ENCODE measurements at regions of chr12 and their contacts with region 1.

Region 1: DNA sequence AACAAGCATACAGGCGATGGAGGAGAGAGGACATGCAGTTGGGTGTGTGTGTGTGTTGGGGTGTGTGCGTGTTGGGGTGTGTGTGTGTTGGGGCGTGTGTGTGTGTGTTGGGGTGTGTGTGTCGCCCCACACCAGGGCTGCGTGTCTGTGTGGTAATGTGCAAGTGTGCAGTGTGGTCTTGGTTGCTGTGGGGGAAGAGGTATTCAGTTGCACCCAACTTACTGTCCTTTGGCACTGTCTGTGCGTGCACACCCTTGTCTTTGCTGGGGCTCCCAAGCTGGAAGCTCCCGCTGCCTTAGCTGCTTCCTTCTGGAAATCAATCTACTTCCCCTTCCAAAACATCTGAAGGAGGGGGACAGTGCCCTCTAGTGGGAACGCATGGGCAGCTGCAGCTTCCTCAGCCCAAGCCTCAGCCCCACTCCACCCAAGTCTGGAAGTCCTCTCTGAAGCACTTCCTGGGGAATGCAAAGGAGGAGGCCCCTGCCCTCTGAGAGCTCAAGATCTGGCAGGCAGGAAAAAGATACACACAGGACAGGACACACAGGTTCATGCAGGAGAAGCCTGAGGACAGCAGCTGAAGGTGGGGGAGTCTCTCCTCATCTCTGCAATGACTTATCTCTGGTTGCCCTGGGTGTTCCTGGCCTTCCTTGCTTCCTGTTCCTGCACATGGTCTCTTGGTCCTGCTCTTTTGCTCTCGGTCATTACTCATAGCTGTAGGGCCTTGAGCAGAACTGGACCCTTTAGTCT is 13.1 kb downstream of the ASIC1 start:
- DNase-seq: peak; percentile 64
- H3K27ac ChIP-seq: peak overlapping the region; percentile 56
- CTCF ChIP-seq: peak; percentile 96

Region 2: GRCh38 chr12:49567611-49568441 is 502.7 kb before region 1 on chr12 and contains the start of gene MCRS1:
- CTCF ChIA-PET with region 1: no interaction called
- POLR2A ChIA-PET with region 1: no interaction called
- DNase-seq: peak; percentile 98
- H3K27ac ChIP-seq: peak within 1 kb of the TSS; percentile 87
- CTCF ChIP-seq: no peak

Region 3: GRCh38 chr12:49866859-49867579 is 203.5 kb before region 1 on chr12:
- CTCF ChIA-PET with region 1: interaction called, 22 read pairs
- POLR2A ChIA-PET with region 1: no interaction called
- DNase-seq: peak; percentile 84
- H3K27ac ChIP-seq: peak overlapping the region; percentile 57
- CTCF ChIP-seq: peak; percentile 93

Region 4: GRCh38 chr12:49967042-49967776 is 103.3 kb before region 1 on chr12:
- CTCF ChIA-PET with region 1: interaction called, 37 read pairs
- POLR2A ChIA-PET with region 1: no interaction called
- DNase-seq: peak; percentile 82
- H3K27ac ChIP-seq: no peak overlapping the region
- CTCF ChIP-seq: peak; percentile 92

Region 5: GRCh38 chr12:50038336-50038735 is 32.2 kb before region 1 on chr12:
- CTCF ChIA-PET with region 1: interaction called, 16 read pairs
- POLR2A ChIA-PET with region 1: no interaction called
- DNase-seq: no peak
- H3K27ac ChIP-seq: no peak overlapping the region
- CTCF ChIP-seq: no peak

Region 6: DNA sequence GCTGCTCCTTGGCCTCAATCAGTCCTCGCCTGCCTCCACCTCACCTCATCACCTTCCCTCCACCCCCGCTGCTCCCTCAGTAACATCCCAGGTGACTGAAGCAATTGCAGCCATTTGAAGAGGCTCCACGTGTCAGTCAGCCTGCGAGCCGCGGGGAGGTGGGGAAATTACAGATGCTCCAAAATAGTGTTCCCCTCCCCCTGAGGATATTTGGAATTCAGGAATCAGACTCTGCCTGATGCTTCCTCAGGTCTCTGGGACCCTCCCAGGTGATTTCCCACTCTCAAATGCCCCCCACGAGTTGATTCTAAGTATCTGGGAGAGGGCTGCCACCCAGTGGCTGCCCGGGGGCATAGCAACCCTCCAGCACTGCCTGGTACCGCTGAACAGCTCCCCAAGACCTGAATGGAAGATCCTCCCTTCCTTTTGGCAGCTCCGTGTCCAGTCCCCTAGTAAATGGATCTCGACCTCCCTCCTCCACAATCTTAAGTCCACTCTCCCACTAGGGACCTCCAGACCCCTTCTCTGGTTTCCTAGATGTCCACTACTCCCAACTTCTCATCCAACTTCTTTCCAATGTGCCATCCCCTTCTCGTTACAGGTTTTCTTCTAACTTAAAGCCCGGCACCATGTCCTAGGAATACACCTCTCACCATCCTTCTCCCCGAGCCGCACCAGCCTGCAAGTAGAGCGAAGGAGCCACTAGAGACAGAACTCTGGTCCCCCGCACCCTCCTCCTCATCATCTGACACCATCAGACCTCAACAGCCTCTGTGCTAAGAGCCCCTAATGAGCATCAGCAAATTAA is 14.5 kb before region 1 on chr12:
- CTCF ChIA-PET with region 1: interaction called, 14 read pairs
- POLR2A ChIA-PET with region 1: no interaction called
- DNase-seq: peak; percentile 79
- H3K27ac ChIP-seq: peak overlapping the region; percentile 15; the same call in 1 of the 2 replicates
- CTCF ChIP-seq: peak; percentile 96

Region 7: GRCh38 chr12:50084775-50085614 is 14.5 kb after region 1 on chr12 and contains the start of gene SMARCD1:
- CTCF ChIA-PET with region 1: interaction called, 24 read pairs
- POLR2A ChIA-PET with region 1: no interaction called
- DNase-seq: peak; percentile 89
- H3K27ac ChIP-seq: peak within 1 kb of the TSS; percentile 97
- CTCF ChIP-seq: peak; percentile 82

Region 8: GRCh38 chr12:50257686-50258551 is 187.4 kb after region 1 on chr12:
- CTCF ChIA-PET with region 1: no interaction called
- POLR2A ChIA-PET with region 1: no interaction called
- DNase-seq: no peak
- H3K27ac ChIP-seq: peak overlapping the region; percentile 64
- CTCF ChIP-seq: no peak

Measured in RWPE1 (cell line).